H1 (cell line): ENCODE measurements at regions of chrX and their contacts with region 1.

Region 1: DNA sequence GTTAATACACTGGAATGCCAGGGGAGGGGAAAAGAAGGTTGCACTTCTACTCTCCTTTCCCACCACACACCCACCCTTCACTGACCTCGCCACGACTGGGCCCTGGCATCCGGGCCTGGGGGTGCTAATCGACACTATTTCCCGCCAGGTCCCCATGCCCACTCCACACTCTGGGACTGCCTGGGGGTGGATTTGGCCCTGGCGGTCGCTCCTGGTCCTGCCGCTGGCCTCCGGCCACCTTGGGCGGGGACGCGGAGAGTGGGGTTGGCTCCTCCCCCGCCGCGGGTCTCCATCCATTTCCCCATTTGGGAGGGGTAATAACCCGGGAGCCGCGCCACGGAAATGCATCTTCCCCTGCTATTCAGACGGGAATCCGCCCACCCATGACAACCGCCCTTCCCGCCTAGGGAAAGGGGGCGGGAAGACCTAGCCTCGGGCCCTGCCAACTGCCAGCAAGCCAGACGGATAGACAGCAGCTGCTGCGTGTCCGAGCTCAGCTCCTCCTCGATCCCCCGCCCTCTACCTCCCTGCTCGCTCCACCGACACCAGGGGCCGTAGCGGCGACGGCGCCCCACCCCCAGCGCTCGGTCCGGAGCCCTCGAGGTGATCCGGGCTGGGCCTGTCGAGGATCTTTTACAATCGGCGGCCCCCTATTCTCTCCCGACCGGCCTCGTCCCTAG is 78.1 kb downstream of the RLIM start:
- DNase-seq: peak in 1 of 2 experiments; percentile 71
- H3K4me3 ChIP-seq: peak overlapping the region; percentile 36 to 64 (median 49)
- H3K27ac ChIP-seq: no peak overlapping the region
- H3K4me1 ChIP-seq: peaks cover 0 to 12% (median 2%) of the 10 kb centered on the region in 4 experiments; a peak in 4 of 7 replicates
- H3K27me3 ChIP-seq: peaks cover 0 to 2% (median 0%) of the 10 kb centered on the region in 4 experiments; a peak in 2 of 7 replicates
- CTCF ChIP-seq: peak; percentile 4 to 36 (median 8); a peak in 2 of 4 replicates
- EP300 ChIP-seq: no peak
- POLR2A ChIP-seq: no peak
- RAD21 ChIP-seq: no peak

Region 2: GRCh38 chrX:74382613-74383012 is 153.7 kb before region 1 on chrX:
- CTCF ChIA-PET with region 1: interaction called, 14 read pairs
- POLR2A ChIA-PET with region 1: no interaction called
- DNase-seq: peak; percentile 17 to 68
- H3K4me3 ChIP-seq: no peak overlapping the region
- H3K27ac ChIP-seq: no peak overlapping the region
- H3K4me1 ChIP-seq: peaks cover 0 to 3% (median 0%) of the 10 kb centered on the region in 4 experiments; a peak in 1 of 7 replicates
- H3K27me3 ChIP-seq: no peaks in the 10 kb centered on the region
- CTCF ChIP-seq: peak; percentile 11 to 72 (median 57)
- EP300 ChIP-seq: no peak
- POLR2A ChIP-seq: no peak
- RAD21 ChIP-seq: peak; percentile 56 to 68

Region 3: GRCh38 chrX:74421036-74421739 is 115.1 kb before region 1 on chrX and contains the start of gene SLC16A2:
- CTCF ChIA-PET with region 1: interaction called, 11 read pairs
- POLR2A ChIA-PET with region 1: interaction called, 5 read pairs
- DNase-seq: peak in 1 of 2 experiments; percentile 60
- H3K4me3 ChIP-seq: peak within 1 kb of the TSS; percentile 55 to 73 (median 66)
- H3K27ac ChIP-seq: no peak within 1 kb of the TSS; the same call in 1 of the 2 replicates
- H3K4me1 ChIP-seq: peaks cover 0 to 8% (median 3%) of the 10 kb centered on the region in 4 experiments; a peak in 4 of 7 replicates
- H3K27me3 ChIP-seq: no peaks in the 10 kb centered on the region; a peak in 1 of 7 replicates
- CTCF ChIP-seq: no peak
- EP300 ChIP-seq: no peak
- POLR2A ChIP-seq: no peak
- RAD21 ChIP-seq: no peak
- total RNA-seq, gene SLC16A2: 23.6 and 24.4 TPM in 2 replicates

Region 4: GRCh38 chrX:74492720-74493201 is 43.5 kb before region 1 on chrX:
- CTCF ChIA-PET with region 1: interaction called, 13 read pairs
- POLR2A ChIA-PET with region 1: interaction called, 3 read pairs
- DNase-seq: peak in 1 of 2 experiments; percentile 66
- H3K4me3 ChIP-seq: no peak overlapping the region
- H3K27ac ChIP-seq: no peak overlapping the region
- H3K4me1 ChIP-seq: peaks cover 1 to 11% (median 5%) of the 10 kb centered on the region in 4 experiments; a peak in 5 of 7 replicates
- H3K27me3 ChIP-seq: no peaks in the 10 kb centered on the region
- CTCF ChIP-seq: peak; percentile 51 to 57 (median 53)
- EP300 ChIP-seq: no peak
- POLR2A ChIP-seq: no peak
- RAD21 ChIP-seq: peak; percentile 41 to 58

Region 5: GRCh38 chrX:74525116-74525515 is 11.2 kb before region 1 on chrX:
- CTCF ChIA-PET with region 1: interaction called, 11 read pairs
- POLR2A ChIA-PET with region 1: no interaction called
- DNase-seq: no peak
- H3K4me3 ChIP-seq: no peak overlapping the region
- H3K27ac ChIP-seq: no peak overlapping the region
- H3K4me1 ChIP-seq: no peaks in the 10 kb centered on the region
- H3K27me3 ChIP-seq: no peaks in the 10 kb centered on the region
- CTCF ChIP-seq: no peak
- EP300 ChIP-seq: no peak
- POLR2A ChIP-seq: no peak
- RAD21 ChIP-seq: no peak